PC-9 (cell line): ENCODE measurements at regions of chr2 and their contacts with region 1.

Region 1: DNA sequence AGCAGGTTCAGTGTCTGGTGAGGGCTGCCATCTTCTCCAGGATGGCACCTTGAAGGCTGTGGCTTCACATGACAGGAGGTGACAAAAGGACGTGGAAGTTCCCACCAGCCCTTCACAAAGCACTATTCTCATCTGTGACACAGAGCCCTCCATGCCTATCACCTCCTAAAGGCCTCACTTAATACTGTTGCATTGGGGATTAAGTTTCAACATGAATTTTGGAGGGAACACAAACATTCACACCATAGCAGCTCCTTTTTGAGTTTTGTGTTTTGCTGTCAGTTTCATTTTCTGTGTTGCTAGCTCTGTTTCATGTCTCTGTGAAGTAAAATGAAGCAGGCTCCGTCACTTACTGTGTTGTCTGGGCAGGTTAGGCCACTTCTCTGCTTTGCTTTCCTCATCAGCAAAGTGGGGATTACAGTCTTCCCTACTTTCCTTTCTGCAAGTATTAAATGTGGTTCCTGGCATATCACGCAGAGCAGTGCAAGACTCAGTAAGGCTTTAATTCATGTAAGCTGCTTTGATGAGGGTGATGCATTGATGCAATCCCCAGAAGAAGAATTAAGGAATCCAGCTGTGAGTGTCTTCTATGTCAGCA is 31.6 kb downstream of the LIMS1 start:
- DNase-seq: no peak
- H3K4me3 ChIP-seq: no peak overlapping the region
- H3K27ac ChIP-seq: no peak overlapping the region
- H3K4me1 ChIP-seq: peaks cover under 1% of the 10 kb centered on the region; the same call in 1 of the 2 replicates
- H3K27me3 ChIP-seq: no peaks in the 10 kb centered on the region
- CTCF ChIP-seq: no peak

Region 2: DNA sequence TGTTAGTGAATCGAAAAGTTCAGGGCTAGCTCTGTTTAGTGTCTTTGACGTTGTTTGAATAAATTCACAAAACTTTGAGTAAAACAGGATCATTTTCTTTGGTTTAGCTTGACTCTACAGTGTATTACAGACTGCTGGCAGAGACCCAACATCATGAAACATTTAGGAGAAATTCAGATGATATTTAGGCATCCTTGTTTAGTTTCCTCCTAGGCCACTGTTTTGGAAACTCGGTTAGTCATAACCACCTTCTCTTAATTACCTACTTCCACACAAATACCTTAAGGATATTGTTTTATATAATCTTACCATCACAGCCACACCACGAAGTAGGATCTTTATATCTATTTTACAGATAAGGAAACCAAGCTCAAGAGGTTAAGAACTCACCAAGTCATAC is 23.8 kb before region 1 on chr2:
- CTCF ChIA-PET with region 1: no interaction called
- POLR2A ChIA-PET with region 1: interaction called, 13 read pairs
- intact Hi-C with region 1: no loop called
- DNase-seq: no peak
- H3K4me3 ChIP-seq: no peak overlapping the region
- H3K27ac ChIP-seq: no peak overlapping the region
- H3K4me1 ChIP-seq: no peaks in the 10 kb centered on the region
- H3K27me3 ChIP-seq: no peaks in the 10 kb centered on the region
- CTCF ChIP-seq: no peak

Region 3: GRCh38 chr2:108548208-108549003 is 17.5 kb before region 1 on chr2:
- CTCF ChIA-PET with region 1: no interaction called
- POLR2A ChIA-PET with region 1: no interaction called
- intact Hi-C with region 1: loop called (anchors 1 kb)
- DNase-seq: no peak
- H3K4me3 ChIP-seq: no peak overlapping the region
- H3K27ac ChIP-seq: no peak overlapping the region
- H3K4me1 ChIP-seq: no peaks in the 10 kb centered on the region
- H3K27me3 ChIP-seq: no peaks in the 10 kb centered on the region
- CTCF ChIP-seq: no peak